ENCODE measurements at regions of chr3 and their contacts with region 1.

Region 1: GRCh38 chr3:184250167-184250828 is 826 bp downstream of the EEF1AKMT4 start:
- DNase-seq: peak; percentile 95
- H3K4me3 Mint-ChIP-seq: peak overlapping the region; percentile 91
- H3K27ac Mint-ChIP-seq: peak overlapping the region; percentile 63
- H3K4me1 Mint-ChIP-seq: peaks cover 8% of the 10 kb centered on the region
- H3K27me3 Mint-ChIP-seq: no peaks in the 10 kb centered on the region

Region 2: DNA sequence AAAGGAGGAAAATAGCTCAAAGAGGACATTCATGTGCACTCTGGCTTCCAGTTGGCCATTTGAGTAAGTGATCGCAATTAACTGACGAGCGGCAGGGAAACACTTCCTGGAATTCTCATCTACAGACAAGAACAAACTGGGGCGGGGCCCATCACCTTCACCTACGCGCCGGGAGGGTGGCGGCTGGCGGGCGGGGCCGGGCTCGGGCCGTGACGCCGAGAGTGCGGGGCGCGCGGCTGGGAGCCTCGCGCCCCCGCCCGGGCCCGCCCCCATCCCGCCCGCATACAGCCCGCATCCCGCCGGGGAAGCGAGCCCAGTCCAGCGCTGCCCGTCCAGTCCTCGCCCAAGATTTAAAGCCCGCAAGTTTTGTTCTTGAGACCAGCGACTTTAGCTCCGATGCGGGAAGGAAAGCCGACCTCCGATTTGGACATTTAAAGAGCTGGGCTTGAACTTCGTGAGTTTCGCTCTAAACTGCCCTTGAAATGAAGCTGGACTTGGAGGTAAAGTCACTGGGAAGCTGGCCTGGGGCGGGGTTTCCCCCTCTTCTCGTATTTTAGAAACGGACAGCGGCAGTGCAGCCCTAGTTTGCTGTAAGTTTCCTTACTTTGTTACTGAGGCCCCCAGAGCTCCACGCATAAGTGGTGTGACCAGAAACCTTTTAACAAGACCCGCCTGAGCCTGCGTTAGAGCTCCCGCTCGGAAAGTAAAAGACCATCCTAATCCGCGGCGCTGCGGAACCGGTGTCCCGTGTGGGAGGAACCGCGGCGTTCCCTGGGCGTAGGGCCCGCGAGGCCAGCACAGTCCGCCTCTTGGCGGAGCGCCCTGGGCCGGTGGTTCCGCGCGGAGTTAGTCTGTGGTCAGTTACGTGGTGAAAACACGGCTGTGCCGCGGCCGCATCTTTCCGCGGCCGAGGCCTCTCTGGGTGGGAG is 997.1 kb before region 1 on chr3 and contains the start of gene B3GNT5:
- CTCF ChIA-PET with region 1: no interaction called
- intact Hi-C with region 1: no loop called
- DNase-seq: peak; percentile 67
- H3K4me3 Mint-ChIP-seq: peak within 1 kb of the TSS; percentile 76
- H3K27ac Mint-ChIP-seq: peak within 1 kb of the TSS; percentile 75
- H3K4me1 Mint-ChIP-seq: peaks cover 29% of the 10 kb centered on the region
- H3K27me3 Mint-ChIP-seq: peaks cover 2% of the 10 kb centered on the region
- total RNA-seq, gene B3GNT5: 15.0 to 18.8 TPM

Region 3: GRCh38 chr3:183697610-183698317 is 552.5 kb before region 1 on chr3 and contains the start of gene YEATS2:
- CTCF ChIA-PET with region 1: no interaction called
- intact Hi-C with region 1: loop called (anchors 1 kb)
- DNase-seq: peak; percentile 79
- H3K4me3 Mint-ChIP-seq: peak within 1 kb of the TSS; percentile 80
- H3K27ac Mint-ChIP-seq: peak within 1 kb of the TSS; percentile 91
- H3K4me1 Mint-ChIP-seq: peaks cover 28% of the 10 kb centered on the region
- H3K27me3 Mint-ChIP-seq: no peaks in the 10 kb centered on the region
- total RNA-seq, gene YEATS2: 38.1 to 39.0 TPM

Region 4: GRCh38 chr3:183924543-183924942 is 325.8 kb before region 1 on chr3:
- CTCF ChIA-PET with region 1: no interaction called
- intact Hi-C with region 1: no loop called
- DNase-seq: no peak
- H3K4me3 Mint-ChIP-seq: no peak overlapping the region
- H3K27ac Mint-ChIP-seq: no peak overlapping the region
- H3K4me1 Mint-ChIP-seq: no peaks in the 10 kb centered on the region
- H3K27me3 Mint-ChIP-seq: no peaks in the 10 kb centered on the region

Region 5: GRCh38 chr3:184017672-184018423 is 232.4 kb before region 1 on chr3 and contains the start of gene ABCC5:
- CTCF ChIA-PET with region 1: no interaction called
- intact Hi-C with region 1: loop called (anchors 1 kb)
- DNase-seq: peak; percentile 88
- H3K4me3 Mint-ChIP-seq: peak within 1 kb of the TSS; percentile 98
- H3K27ac Mint-ChIP-seq: peak within 1 kb of the TSS; percentile 77
- H3K4me1 Mint-ChIP-seq: peaks cover 16% of the 10 kb centered on the region
- H3K27me3 Mint-ChIP-seq: no peaks in the 10 kb centered on the region
- total RNA-seq, gene ABCC5: 11.2 to 12.0 TPM

Region 6: DNA sequence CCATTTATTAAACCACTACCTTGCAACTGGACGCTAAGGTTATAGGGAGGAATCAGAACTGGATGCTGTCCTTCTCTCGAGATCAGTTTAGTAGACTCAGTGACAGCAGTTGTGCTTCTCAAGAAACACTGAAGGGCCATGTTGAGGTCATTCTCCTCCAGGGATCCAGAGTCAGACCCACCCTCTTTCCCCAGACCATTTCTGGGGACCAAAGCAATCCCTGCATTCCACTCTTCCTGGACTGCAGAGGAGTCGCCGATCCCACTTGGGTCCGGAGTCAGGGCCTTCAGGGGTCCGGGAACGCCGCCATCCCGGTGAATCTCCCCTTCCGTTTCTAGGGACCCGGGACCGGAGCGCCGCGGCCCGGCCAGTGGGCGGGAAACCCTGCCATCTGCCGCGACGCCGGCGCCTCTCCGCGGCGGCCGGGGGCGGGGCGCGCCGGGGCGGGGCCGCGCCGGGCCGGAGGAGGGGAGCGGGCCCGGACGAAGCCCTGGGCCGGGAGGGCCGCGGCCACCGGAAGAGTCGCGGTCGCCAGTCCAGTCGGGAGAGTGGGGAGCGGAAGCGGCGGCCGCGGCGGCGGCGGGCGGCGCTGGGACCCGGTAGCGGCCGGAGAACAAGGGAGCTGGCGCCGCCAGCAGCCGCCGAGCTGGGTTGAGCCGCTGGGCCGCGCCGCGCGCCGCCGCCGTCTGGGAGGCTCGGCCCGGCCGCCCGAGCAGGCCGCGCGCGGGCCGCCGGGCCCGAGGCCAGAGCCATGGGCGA is 95.2 kb before region 1 on chr3 and contains the start of gene DVL3:
- CTCF ChIA-PET with region 1: interaction called, 3 read pairs
- intact Hi-C with region 1: loop called (anchors 1 kb)
- DNase-seq: peak; percentile 25
- H3K4me3 Mint-ChIP-seq: peak within 1 kb of the TSS; percentile 94
- H3K27ac Mint-ChIP-seq: peak within 1 kb of the TSS; percentile 66
- H3K4me1 Mint-ChIP-seq: peaks cover 19% of the 10 kb centered on the region
- H3K27me3 Mint-ChIP-seq: no peaks in the 10 kb centered on the region
- total RNA-seq, gene DVL3: 19.6 to 19.9 TPM

Region 7: GRCh38 chr3:184229394-184230080 is 20.8 kb before region 1 on chr3 and contains the start of gene VWA5B2:
- CTCF ChIA-PET with region 1: interaction called, 48 read pairs
- intact Hi-C with region 1: loop called (anchors 1 kb)
- DNase-seq: peak; percentile 41
- H3K4me3 Mint-ChIP-seq: peak within 1 kb of the TSS; percentile 52
- H3K27ac Mint-ChIP-seq: no peak within 1 kb of the TSS
- H3K4me1 Mint-ChIP-seq: peaks cover 11% of the 10 kb centered on the region
- H3K27me3 Mint-ChIP-seq: peaks cover 50% of the 10 kb centered on the region
- total RNA-seq, gene VWA5B2: not detected

Region 8: DNA sequence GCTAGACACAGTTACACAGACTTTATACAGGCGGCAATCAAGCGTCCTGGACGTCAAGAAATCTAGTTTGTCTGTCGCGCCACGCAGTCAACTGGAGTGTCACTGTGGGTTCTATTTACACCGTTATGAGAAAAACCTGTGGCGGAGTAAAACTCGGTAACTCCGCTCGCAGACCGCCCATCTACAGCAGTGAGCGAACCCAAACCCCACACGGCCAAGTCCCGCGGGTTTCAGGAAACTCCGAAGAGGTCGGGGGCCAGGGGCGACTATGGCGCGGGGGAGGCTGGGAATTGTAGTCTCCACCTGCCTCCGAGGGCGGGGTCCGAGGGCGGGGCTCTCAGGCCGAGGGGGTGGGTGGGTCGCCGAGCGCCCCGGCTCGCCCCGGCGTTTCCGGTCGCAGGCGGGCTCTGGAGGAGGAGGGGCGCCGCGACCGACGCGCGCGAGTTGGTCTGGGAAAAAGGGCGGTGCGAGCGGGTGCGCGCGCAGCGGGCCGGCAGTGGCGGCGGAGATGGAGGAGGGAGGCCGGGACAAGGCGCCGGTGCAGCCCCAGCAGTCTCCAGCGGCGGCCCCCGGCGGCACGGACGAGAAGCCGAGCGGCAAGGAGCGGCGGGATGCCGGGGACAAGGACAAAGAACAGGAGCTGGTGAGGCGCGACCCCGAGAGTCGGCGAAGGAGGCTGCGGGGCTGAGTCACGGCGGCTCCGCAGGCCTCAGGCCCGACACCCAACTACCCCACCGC is 48.6 kb after region 1 on chr3 and contains the start of gene PSMD2:
- CTCF ChIA-PET with region 1: interaction called, 7 read pairs
- intact Hi-C with region 1: loop called (anchors 1 kb)
- DNase-seq: peak; percentile 99
- H3K4me3 Mint-ChIP-seq: peak within 1 kb of the TSS; percentile 98
- H3K27ac Mint-ChIP-seq: peak within 1 kb of the TSS; percentile 87
- H3K4me1 Mint-ChIP-seq: peaks cover 21% of the 10 kb centered on the region
- H3K27me3 Mint-ChIP-seq: no peaks in the 10 kb centered on the region
- total RNA-seq, gene PSMD2: 244 to 257 TPM

Region 9: GRCh38 chr3:184325715-184326369 is 75.5 kb after region 1 on chr3:
- CTCF ChIA-PET with region 1: no interaction called
- intact Hi-C with region 1: no loop called
- DNase-seq: peak; percentile 49
- H3K4me3 Mint-ChIP-seq: no peak overlapping the region
- H3K27ac Mint-ChIP-seq: peak overlapping the region; percentile 72
- H3K4me1 Mint-ChIP-seq: peaks cover 37% of the 10 kb centered on the region
- H3K27me3 Mint-ChIP-seq: no peaks in the 10 kb centered on the region

Region 10: DNA sequence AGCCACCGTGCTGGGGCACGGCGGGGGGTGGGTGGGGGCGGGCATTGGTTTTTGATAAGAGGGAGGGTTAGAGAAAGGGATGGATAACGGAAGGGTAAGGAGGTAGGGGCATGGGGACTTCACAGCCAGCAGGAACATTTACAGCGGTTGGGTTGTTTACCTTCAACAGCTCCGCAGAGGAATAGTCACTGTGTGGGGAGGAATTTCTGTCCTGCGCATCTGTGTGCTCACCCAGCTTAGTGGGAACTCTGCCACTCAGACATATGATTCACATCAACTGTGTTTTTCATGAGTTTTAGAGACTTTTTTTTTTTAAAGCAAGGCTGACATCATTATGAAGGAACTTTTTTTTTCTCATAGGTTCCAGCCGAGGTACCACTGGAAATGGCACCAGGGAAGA is 149.1 kb after region 1 on chr3:
- CTCF ChIA-PET with region 1: no interaction called
- intact Hi-C with region 1: no loop called
- DNase-seq: no peak
- H3K4me3 Mint-ChIP-seq: no peak overlapping the region
- H3K27ac Mint-ChIP-seq: no peak overlapping the region
- H3K4me1 Mint-ChIP-seq: no peaks in the 10 kb centered on the region
- H3K27me3 Mint-ChIP-seq: peaks cover 14% of the 10 kb centered on the region

Region 11: GRCh38 chr3:184811999-184812661 is 561.8 kb after region 1 on chr3 and contains the start of gene VPS8:
- CTCF ChIA-PET with region 1: no interaction called
- intact Hi-C with region 1: loop called (anchors 2 kb)
- DNase-seq: peak; percentile 97
- H3K4me3 Mint-ChIP-seq: peak within 1 kb of the TSS; percentile 92
- H3K27ac Mint-ChIP-seq: peak within 1 kb of the TSS; percentile 85
- H3K4me1 Mint-ChIP-seq: peaks cover 48% of the 10 kb centered on the region
- H3K27me3 Mint-ChIP-seq: no peaks in the 10 kb centered on the region
- total RNA-seq, gene VPS8: 32.7 to 33.7 TPM

Measured in activated naive CD4-positive, alpha-beta T cell treated with anti-CD3 and anti-CD28 coated beads for 36 hours (primary cell).